ENCODE measurements at regions of chr15 and their contacts with region 1.

Region 1: DNA sequence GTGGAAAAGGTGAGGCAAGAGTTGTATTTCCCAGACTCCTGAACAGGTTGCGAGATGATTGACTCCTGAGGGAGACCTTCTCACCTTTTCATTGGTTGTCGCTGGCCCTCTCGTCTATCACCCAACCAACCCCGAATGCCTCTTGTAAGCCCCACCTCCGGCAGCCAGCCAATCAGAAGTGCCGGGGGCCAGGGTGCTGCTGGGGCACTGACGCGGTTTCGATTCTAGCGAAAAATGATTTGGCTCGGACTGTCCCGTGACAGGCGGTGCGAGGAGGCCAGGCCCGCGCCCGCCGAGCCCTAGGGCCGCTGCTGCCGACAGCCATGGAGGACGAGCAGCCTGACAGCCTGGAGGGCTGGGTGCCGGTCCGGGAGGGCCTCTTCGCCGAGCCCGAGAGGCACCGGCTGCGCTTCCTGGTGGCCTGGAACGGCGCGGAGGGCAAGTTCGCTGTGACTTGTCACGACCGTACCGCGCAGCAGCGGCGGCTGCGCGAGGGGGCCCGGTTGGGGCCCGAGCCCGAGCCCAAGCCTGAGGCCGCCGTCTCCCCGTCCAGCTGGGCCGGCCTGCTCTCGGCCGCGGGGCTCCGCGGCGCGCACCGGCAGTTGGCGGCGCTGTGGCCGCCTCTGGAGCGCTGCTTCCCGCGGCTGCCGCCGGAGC is at the start of gene WHAMM:
- DNase-seq: peak; percentile 100
- ATAC-seq: peak; percentile 79 to 83
- H3K4me3 ChIP-seq: peak within 1 kb of the TSS; percentile 69 to 86 (median 79)
- H3K27ac ChIP-seq: peak within 1 kb of the TSS; percentile 92 to 99 (median 96)
- H3K4me1 ChIP-seq: peaks cover 49 to 60% of the 10 kb centered on the region in 2 donors
- H3K27me3 ChIP-seq: no peaks in the 10 kb centered on the region
- CTCF ChIP-seq: peak in 2 of 5 experiments; percentile 15 to 29
- POLR2A ChIP-seq: peak; percentile 99
- total RNA-seq, gene WHAMM: 14.1 to 22.1 (median 21.8) TPM

Region 2: GRCh38 chr15:82540055-82540983 is 269.2 kb before region 1 on chr15 and contains the start of gene RPS17:
- in situ Hi-C with region 1: loop called in 2 of 4 experiments (anchors 25 kb)
- intact Hi-C with region 1: no loop called
- DNase-seq: peak; percentile 89 to 94
- ATAC-seq: peak; percentile 91 to 95
- H3K4me3 ChIP-seq: peak within 1 kb of the TSS; percentile 82 to 88 (median 85)
- H3K27ac ChIP-seq: peak within 1 kb of the TSS; percentile 80 to 91 (median 83)
- H3K4me1 ChIP-seq: peaks cover 8 to 11% of the 10 kb centered on the region in 2 donors
- H3K27me3 ChIP-seq: no peaks in the 10 kb centered on the region
- CTCF ChIP-seq: peak; percentile 99 to 100 (median 99)
- POLR2A ChIP-seq: peak; percentile 85 to 91
- total RNA-seq, gene RPS17: 1,547 to 2,112 (median 1,667) TPM

Region 3: DNA sequence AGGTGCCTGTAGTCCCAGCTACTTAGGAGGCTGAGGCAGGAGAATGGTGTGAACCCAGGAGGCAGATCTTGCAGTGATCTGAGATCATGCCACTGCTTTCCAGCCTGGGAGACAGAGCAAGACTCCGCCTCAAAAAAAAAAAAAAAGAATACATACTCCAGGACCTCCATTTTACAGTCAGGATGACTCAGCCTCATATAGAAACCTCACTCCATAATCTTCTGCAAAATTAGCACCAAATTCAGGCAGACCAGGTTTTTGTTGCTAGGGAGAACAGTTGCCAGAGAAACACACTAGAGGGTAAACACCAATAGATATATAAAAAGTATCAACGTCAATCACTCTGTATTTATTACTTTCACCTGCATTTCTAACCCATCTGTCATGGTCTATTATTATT is 71.6 kb before region 1 on chr15:
- in situ Hi-C with region 1: no loop called
- intact Hi-C with region 1: no loop called
- DNase-seq: no peak
- ATAC-seq: no peak
- H3K4me3 ChIP-seq: no peak overlapping the region
- H3K27ac ChIP-seq: no peak overlapping the region
- H3K4me1 ChIP-seq: no peaks in the 10 kb centered on the region
- H3K27me3 ChIP-seq: no peaks in the 10 kb centered on the region
- CTCF ChIP-seq: no peak
- POLR2A ChIP-seq: no peak

Region 4: GRCh38 chr15:82749951-82750830 is 59.3 kb before region 1 on chr15:
- in situ Hi-C with region 1: loop called in 1 of 4 experiments (anchors 10 kb)
- intact Hi-C with region 1: loop called (anchors 1 kb)
- DNase-seq: peak; percentile 91 to 94
- ATAC-seq: peak; percentile 91 to 96
- H3K4me3 ChIP-seq: peak overlapping the region; percentile 66 to 86 (median 80)
- H3K27ac ChIP-seq: peak overlapping the region; percentile 88 to 96 (median 93)
- H3K4me1 ChIP-seq: peaks cover 40 to 45% of the 10 kb centered on the region in 2 donors
- H3K27me3 ChIP-seq: no peaks in the 10 kb centered on the region
- CTCF ChIP-seq: no peak
- POLR2A ChIP-seq: peak; percentile 98 to 99

Region 5: GRCh38 chr15:82768428-82769081 is 41.0 kb before region 1 on chr15:
- in situ Hi-C with region 1: loop called in 1 of 4 experiments (anchors 5 kb)
- intact Hi-C with region 1: loop called (anchors 2 kb)
- DNase-seq: peak; percentile 85 to 88
- ATAC-seq: peak; percentile 76 to 87
- H3K4me3 ChIP-seq: no peak overlapping the region
- H3K27ac ChIP-seq: peak overlapping the region; percentile 88 to 96 (median 92)
- H3K4me1 ChIP-seq: peaks cover 46 to 62% of the 10 kb centered on the region in 2 donors
- H3K27me3 ChIP-seq: no peaks in the 10 kb centered on the region
- CTCF ChIP-seq: no peak
- POLR2A ChIP-seq: peak; percentile 40 to 47

Region 6: GRCh38 chr15:82942617-82943078 is 133.1 kb after region 1 on chr15:
- in situ Hi-C with region 1: no loop called
- intact Hi-C with region 1: loop called (anchors 5 kb)
- DNase-seq: peak; percentile 78 to 93
- ATAC-seq: peak; percentile 96 to 97
- H3K4me3 ChIP-seq: no peak overlapping the region
- H3K27ac ChIP-seq: peak overlapping the region; percentile 72 to 89 (median 78)
- H3K4me1 ChIP-seq: peaks cover 36 to 55% of the 10 kb centered on the region in 2 donors
- H3K27me3 ChIP-seq: no peaks in the 10 kb centered on the region
- CTCF ChIP-seq: no peak
- POLR2A ChIP-seq: no peak

Measured in gastrocnemius medialis (tissue), 4 donors.